ENCODE measurements at regions of chr7 and their contacts with region 1.

Region 1: DNA sequence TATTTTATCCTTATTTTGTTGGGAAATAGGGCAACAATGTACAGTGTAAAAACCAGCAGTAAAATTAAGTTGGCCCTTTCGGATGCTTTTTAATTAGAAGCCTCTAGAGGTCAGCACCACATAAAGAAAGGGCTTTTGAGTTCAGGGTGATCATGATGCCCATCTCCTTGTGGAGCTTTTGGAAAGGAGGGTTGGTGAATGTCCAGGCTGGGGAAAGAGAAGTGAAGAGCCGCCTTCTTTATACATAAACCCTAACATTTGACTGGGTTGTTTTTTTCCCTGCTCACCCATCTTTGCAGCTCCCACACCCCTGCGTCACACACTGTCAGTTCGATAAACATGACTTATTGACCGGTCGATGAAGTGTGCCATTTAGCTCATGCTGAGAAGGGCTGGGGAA is 29.8 kb downstream of the MTURN start:
- DNase-seq: no peak
- ATAC-seq: peak; percentile 47 to 71 (median 62)
- H3K4me3 ChIP-seq: no peak overlapping the region
- H3K27ac ChIP-seq: no peak overlapping the region
- H3K4me1 ChIP-seq: peaks cover 0 to 74% (median 18%) of the 10 kb centered on the region in 12 donors
- H3K27me3 ChIP-seq: no peaks in the 10 kb centered on the region
- CTCF ChIP-seq: peak; percentile 33 to 76 (median 62)
- POLR2A ChIP-seq: no peak

Region 2: GRCh38 chr7:30146127-30146612 is 18.4 kb before region 1 on chr7:
- intact Hi-C with region 1: loop called in 1 of 10 experiments (anchors 1 kb)
- DNase-seq: peak in 1 of 5 donors; percentile 55
- ATAC-seq: peak; percentile 41 to 66 (median 52)
- H3K4me3 ChIP-seq: no peak overlapping the region
- H3K27ac ChIP-seq: peak overlapping the region in 1 of 12 donors; percentile 49
- H3K4me1 ChIP-seq: peaks cover 0 to 40% (median 21%) of the 10 kb centered on the region in 12 donors
- H3K27me3 ChIP-seq: no peaks in the 10 kb centered on the region
- CTCF ChIP-seq: no peak
- POLR2A ChIP-seq: no peak

Region 3: GRCh38 chr7:30276203-30276900 is 111.8 kb after region 1 on chr7:
- intact Hi-C with region 1: loop called in 8 of 10 experiments (anchors 2 to 10 kb)
- DNase-seq: peak in 2 of 5 donors; percentile 30 to 34
- ATAC-seq: peak in 3 of 4 donors; percentile 60 to 86 (median 79)
- H3K4me3 ChIP-seq: no peak overlapping the region
- H3K27ac ChIP-seq: no peak overlapping the region
- H3K4me1 ChIP-seq: peaks cover 0 to 19% (median 0%) of the 10 kb centered on the region in 12 donors
- H3K27me3 ChIP-seq: no peaks in the 10 kb centered on the region
- CTCF ChIP-seq: peak; percentile 35 to 78 (median 64)
- POLR2A ChIP-seq: no peak

Region 4: GRCh38 chr7:30412810-30413504 is 248.4 kb after region 1 on chr7:
- intact Hi-C with region 1: loop called (anchors 2 to 10 kb)
- DNase-seq: peak in 1 of 5 donors; percentile 30
- ATAC-seq: peak; percentile 82 to 95 (median 92)
- H3K4me3 ChIP-seq: no peak overlapping the region
- H3K27ac ChIP-seq: no peak overlapping the region
- H3K4me1 ChIP-seq: peaks cover 0 to 14% (median 0%) of the 10 kb centered on the region in 12 donors
- H3K27me3 ChIP-seq: no peaks in the 10 kb centered on the region
- CTCF ChIP-seq: peak; percentile 26 to 77 (median 64)
- POLR2A ChIP-seq: no peak

Region 5: GRCh38 chr7:30459591-30460257 is 295.2 kb after region 1 on chr7:
- intact Hi-C with region 1: no loop called
- DNase-seq: peak in 1 of 5 donors; percentile 68
- ATAC-seq: peak in 3 of 4 donors; percentile 38 to 86 (median 64)
- H3K4me3 ChIP-seq: peak overlapping the region in 1 of 12 donors; percentile 9
- H3K27ac ChIP-seq: peak overlapping the region in 8 of 12 donors; percentile 12 to 69 (median 44)
- H3K4me1 ChIP-seq: peaks cover 7 to 63% (median 29%) of the 10 kb centered on the region in 12 donors
- H3K27me3 ChIP-seq: no peaks in the 10 kb centered on the region
- CTCF ChIP-seq: no peak
- POLR2A ChIP-seq: no peak

Region 6: GRCh38 chr7:30564243-30564892 is 399.8 kb after region 1 on chr7:
- intact Hi-C with region 1: loop called in 8 of 10 experiments (anchors 2 to 10 kb)
- DNase-seq: peak; percentile 76 to 83 (median 79)
- ATAC-seq: peak; percentile 81 to 94 (median 94)
- H3K4me3 ChIP-seq: no peak overlapping the region
- H3K27ac ChIP-seq: no peak overlapping the region
- H3K4me1 ChIP-seq: peaks cover 0 to 23% (median 1%) of the 10 kb centered on the region in 12 donors
- H3K27me3 ChIP-seq: no peaks in the 10 kb centered on the region
- CTCF ChIP-seq: peak; percentile 74 to 90 (median 86)
- POLR2A ChIP-seq: no peak

Region 7: DNA sequence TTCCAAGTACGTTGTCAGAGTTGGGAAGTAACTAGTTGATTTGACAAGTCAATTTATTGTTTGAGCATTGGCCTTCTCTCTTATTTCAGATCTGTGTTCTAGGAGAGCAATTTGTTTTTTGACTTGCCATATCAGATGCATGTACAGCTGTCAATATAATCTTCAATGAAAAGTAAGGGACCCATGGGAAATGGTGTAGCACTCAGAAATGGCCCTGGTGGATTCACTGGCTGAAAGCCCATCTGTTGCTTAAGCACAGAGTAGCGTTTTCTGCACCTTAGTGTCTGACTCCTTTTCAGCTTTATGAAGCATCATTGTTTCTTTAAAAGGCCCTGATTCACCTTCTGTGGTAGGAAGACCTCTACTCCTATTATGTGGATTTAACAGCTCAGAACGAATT is 440.3 kb after region 1 on chr7:
- intact Hi-C with region 1: no loop called
- DNase-seq: no peak
- ATAC-seq: no peak
- H3K4me3 ChIP-seq: no peak overlapping the region
- H3K27ac ChIP-seq: no peak overlapping the region
- H3K4me1 ChIP-seq: no peaks in the 10 kb centered on the region
- H3K27me3 ChIP-seq: no peaks in the 10 kb centered on the region
- CTCF ChIP-seq: no peak
- POLR2A ChIP-seq: no peak

Measured in heart left ventricle (tissue), 16 donors.